ENCODE measurements at regions of chr19 and their contacts with region 1.

Region 1: GRCh38 chr19:8355631-8356402 is 8.1 kb upstream of the ANGPTL4 start:
- DNase-seq: peak in 1 of 3 donors; percentile 35
- ATAC-seq: peak; percentile 51
- H3K4me3 ChIP-seq: no peak overlapping the region
- H3K4me1 ChIP-seq: no peaks in the 10 kb centered on the region
- CTCF ChIP-seq: no peak

Region 2: DNA sequence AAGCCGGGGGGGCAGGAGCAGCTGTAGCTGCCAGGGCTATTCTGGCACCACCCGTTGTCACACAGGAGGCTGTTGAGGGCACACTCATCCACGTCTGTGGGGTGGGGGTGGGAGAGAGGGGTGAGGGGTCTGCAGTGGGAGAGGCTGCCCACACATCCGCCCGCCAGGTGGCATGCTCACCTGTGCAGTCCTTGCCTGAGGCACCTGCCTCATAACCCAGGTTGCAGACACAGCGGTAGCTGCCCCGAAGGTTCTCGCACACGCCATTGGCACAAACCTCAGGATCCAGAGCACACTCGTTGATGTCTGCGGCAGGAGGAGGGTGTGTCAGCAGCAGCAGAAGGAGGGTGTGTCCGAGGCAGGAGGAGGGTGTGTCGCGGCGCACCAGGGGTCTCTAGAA is 226.8 kb before region 1 on chr19:
- intact Hi-C with region 1: no loop called
- DNase-seq: no peak
- ATAC-seq: no peak
- H3K4me3 ChIP-seq: no peak overlapping the region
- H3K4me1 ChIP-seq: no peaks in the 10 kb centered on the region
- CTCF ChIP-seq: no peak

Region 3: DNA sequence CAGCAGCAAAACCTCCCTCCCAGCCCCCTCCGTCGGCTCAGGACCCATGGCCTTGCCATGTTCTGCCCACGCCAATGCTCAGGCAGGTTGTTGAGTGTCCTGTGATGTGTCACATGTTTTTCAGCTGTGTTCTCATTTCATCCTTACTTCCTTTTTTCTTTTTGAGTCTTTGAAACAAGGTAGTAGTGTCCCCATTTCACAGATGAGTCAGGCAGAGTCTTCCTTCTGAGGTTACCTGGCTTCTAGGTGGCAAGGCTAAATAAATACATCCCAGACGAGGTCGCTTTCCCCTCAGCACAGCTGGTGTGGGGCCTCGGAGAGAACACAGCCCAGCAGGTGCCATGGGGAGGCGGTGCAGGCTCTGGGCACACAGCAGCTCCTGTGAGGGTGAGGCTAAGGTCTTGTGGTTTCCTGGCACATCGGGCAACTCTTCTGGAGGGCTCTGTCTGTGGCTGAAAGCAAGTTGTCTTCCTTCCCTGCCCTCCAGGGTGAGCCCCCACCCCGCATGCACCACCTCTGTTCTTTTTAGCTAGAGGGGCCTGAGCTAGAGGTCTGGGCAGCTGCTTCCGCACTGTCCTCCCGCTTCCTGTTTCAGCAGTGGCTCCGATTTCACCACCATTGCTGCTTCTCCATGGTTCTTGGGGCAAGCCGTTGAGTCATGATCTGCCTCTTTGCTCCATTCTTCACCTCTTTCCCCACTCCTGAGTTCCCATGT is 131.5 kb after region 1 on chr19:
- intact Hi-C with region 1: loop called in 1 of 2 experiments (anchors 10 kb)
- DNase-seq: peak in 2 of 3 donors; percentile 31 to 62
- ATAC-seq: peak; percentile 33
- H3K4me3 ChIP-seq: no peak overlapping the region
- H3K4me1 ChIP-seq: no peaks in the 10 kb centered on the region
- CTCF ChIP-seq: no peak

Region 4: GRCh38 chr19:8505680-8506401 is 150.0 kb after region 1 on chr19:
- intact Hi-C with region 1: loop called in 1 of 2 experiments (anchors 10 kb)
- DNase-seq: peak; percentile 79 to 87 (median 87)
- ATAC-seq: peak; percentile 83
- H3K4me3 ChIP-seq: no peak overlapping the region
- H3K4me1 ChIP-seq: peaks cover 12% of the 10 kb centered on the region
- CTCF ChIP-seq: peak; percentile 75

Measured in mucosa of descending colon (tissue), 3 donors.